GM12878 (cell line): ENCODE measurements at regions of chr10 and their contacts with region 1.

Region 1: DNA sequence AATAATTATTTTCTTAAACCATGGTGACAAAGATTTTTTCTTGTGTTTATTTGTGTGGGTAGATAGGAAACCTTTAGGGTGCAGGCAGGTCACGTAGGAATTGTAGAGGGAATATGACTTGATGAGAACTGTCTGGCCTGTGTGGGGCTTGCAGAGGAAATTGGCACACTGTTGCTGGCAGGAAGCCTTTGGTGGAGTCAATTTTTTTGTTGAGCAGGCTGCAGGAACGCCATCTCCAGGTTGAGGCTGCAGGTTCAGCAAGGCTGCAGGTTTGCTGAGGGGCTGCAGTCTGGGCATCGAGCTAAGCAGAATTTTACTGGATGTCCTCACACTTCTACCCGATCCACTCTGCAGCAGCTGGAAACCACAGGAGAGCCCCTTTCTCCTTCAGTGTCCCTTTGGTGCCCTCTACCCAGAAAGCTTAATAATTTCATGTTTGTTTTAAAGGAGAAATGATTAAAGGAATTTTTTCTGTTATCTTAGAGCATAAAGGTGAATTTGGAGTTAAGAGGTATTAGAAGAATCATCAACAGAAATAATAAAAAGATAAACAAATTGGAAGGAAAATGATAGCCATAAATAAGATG is 37.0 kb downstream of the TBC1D12 start:
- DNase-seq: no peak
- ATAC-seq: no peak
- H3K4me3 ChIP-seq: no peak overlapping the region
- H3K27ac ChIP-seq: no peak overlapping the region
- H3K4me1 ChIP-seq: no peaks in the 10 kb centered on the region
- H3K27me3 ChIP-seq: no peaks in the 10 kb centered on the region
- CTCF ChIP-seq: no peak
- EP300 ChIP-seq: no peak
- POLR2A ChIP-seq: no peak
- RAD21 ChIP-seq: no peak

Region 2: DNA sequence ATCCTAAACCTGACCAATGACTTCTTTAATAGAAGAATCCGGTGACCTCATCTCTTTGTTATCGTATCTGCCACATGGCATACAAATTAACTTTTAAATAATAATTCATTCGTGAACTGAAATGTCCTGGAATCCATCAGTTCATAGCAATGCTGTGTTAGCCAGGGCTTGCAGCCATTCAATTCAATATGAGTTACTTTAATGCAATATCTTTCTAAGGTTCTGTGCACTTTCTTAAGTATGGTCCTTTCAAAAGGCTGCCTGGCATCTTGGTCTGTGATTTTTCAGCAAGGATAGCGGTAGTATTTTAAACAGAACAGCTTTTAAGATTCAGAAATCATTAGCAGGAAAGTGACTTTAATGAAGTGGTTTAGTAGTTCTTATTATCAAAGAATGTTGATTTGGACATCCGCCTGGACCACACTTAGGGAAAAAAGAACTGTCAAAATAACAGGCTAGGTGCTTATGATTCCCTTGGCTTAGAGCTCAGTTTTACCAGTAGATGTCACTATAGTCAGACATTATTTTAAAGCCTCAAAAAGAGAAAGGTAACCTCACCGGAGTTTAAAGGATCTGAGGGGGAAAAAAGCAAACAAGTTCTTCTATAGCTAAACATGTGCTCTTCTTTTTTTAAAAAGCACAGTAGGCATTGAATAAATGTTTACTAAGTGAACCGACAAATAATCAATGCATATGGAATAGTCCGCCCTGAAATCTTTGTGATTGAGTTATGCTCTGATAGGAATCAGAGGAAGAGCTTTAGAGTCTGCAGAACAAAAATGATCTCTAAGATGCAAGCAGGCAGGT is 522.9 kb before region 1 on chr10:
- CTCF ChIA-PET with region 1: interaction called, 14 read pairs
- POLR2A ChIA-PET with region 1: no interaction called
- RAD21 ChIA-PET with region 1: interaction called, 8 read pairs
- SMC1A ChIA-PET with region 1: interaction called, 3 read pairs
- in situ Hi-C with region 1: loop called (anchors 10 kb)
- intact Hi-C with region 1: loop called (anchors 5 kb)
- DNase-seq: no peak
- ATAC-seq: peak; percentile 41; the same call in 2 of the 3 replicates
- H3K4me3 ChIP-seq: no peak overlapping the region
- H3K27ac ChIP-seq: no peak overlapping the region
- H3K4me1 ChIP-seq: no peaks in the 10 kb centered on the region
- H3K27me3 ChIP-seq: no peaks in the 10 kb centered on the region
- CTCF ChIP-seq: peak; percentile 33 to 41 (median 41); a peak in 5 of 6 replicates
- EP300 ChIP-seq: no peak
- POLR2A ChIP-seq: no peak
- RAD21 ChIP-seq: peak; percentile 46

Region 3: DNA sequence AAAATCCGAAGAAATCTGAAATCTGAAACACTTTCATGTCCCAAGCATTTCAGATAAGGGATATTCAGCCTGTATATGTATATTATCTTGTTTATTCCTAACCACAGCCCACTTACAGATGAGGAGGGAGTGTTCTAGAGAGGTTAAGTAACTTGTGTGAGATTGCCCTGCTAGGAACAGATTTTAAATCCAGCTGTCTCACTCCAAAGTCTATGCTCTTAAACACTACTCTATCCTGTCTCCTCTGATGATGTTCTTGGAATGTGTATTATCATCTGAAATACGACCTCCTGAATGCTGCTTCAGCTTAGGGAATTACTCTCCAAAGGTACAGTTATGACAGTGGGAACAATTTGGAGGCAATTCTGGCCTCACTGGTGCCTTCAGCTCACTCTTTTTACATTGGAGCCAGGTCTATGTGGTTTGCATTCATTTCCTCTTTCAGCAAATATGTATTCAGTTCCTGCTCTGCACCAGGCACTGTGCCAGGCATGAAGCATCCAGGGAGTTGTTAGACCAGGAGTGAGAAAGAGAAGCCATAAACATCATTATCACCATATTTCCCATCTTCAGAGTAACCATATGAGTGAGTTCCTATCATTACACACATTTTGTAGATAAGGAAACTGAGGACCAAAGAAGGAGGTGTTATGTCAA is 146.8 kb before region 1 on chr10:
- CTCF ChIA-PET with region 1: interaction called, 11 read pairs
- POLR2A ChIA-PET with region 1: no interaction called
- RAD21 ChIA-PET with region 1: interaction called, 3 read pairs
- SMC1A ChIA-PET with region 1: interaction called, 5 read pairs
- in situ Hi-C with region 1: no loop called
- intact Hi-C with region 1: no loop called
- DNase-seq: no peak
- ATAC-seq: no peak
- H3K4me3 ChIP-seq: no peak overlapping the region
- H3K27ac ChIP-seq: no peak overlapping the region
- H3K4me1 ChIP-seq: no peaks in the 10 kb centered on the region
- H3K27me3 ChIP-seq: no peaks in the 10 kb centered on the region
- CTCF ChIP-seq: no peak
- EP300 ChIP-seq: no peak
- POLR2A ChIP-seq: no peak
- RAD21 ChIP-seq: no peak

Region 4: DNA sequence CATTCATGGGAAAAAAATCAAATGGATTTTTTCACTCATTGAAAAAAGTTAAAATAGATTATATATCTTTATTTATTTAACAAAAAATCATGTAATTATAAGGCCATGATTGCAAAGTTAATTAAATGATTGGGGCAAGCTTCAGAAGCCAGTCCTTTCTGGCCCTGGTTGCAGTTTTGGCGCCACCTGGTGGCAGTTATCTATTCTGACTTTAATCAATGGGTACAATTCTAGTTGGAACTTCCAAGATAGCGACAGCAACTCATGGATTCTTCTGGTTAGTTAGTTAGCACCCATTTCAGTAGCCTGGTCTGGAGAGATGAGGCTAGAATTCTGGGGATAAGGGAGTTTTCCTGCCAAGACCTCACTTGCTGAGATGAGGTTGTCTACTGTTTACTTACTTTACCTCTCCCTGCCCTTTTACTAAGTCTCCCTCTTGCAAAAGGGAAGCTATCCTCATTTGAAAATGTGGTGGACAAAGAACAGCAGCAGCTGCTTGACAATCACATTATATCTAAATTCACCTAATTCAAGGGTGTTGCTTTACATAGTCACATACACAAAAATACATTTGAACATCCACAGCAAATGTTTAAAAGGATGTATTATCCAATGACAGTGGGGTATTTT is 119.0 kb before region 1 on chr10:
- CTCF ChIA-PET with region 1: interaction called, 68 read pairs
- POLR2A ChIA-PET with region 1: interaction called, 3 read pairs
- RAD21 ChIA-PET with region 1: interaction called, 21 read pairs
- SMC1A ChIA-PET with region 1: interaction called, 17 read pairs
- in situ Hi-C with region 1: no loop called
- intact Hi-C with region 1: no loop called
- DNase-seq: no peak
- ATAC-seq: peak; percentile 89
- H3K4me3 ChIP-seq: no peak overlapping the region
- H3K27ac ChIP-seq: no peak overlapping the region
- H3K4me1 ChIP-seq: no peaks in the 10 kb centered on the region
- H3K27me3 ChIP-seq: no peaks in the 10 kb centered on the region
- CTCF ChIP-seq: peak; percentile 69 to 80 (median 69)
- EP300 ChIP-seq: no peak
- POLR2A ChIP-seq: no peak
- RAD21 ChIP-seq: peak; percentile 65

Region 5: GRCh38 chr10:94353336-94353735 is 86.0 kb before region 1 on chr10:
- CTCF ChIA-PET with region 1: interaction called, 10 read pairs
- POLR2A ChIA-PET with region 1: no interaction called
- RAD21 ChIA-PET with region 1: interaction called, 8 read pairs
- SMC1A ChIA-PET with region 1: interaction called, 5 read pairs
- in situ Hi-C with region 1: no loop called
- intact Hi-C with region 1: no loop called
- DNase-seq: no peak
- ATAC-seq: no peak
- H3K4me3 ChIP-seq: no peak overlapping the region
- H3K27ac ChIP-seq: no peak overlapping the region
- H3K4me1 ChIP-seq: no peaks in the 10 kb centered on the region; the same call in 1 of the 2 replicates
- H3K27me3 ChIP-seq: no peaks in the 10 kb centered on the region
- CTCF ChIP-seq: no peak
- EP300 ChIP-seq: no peak
- POLR2A ChIP-seq: no peak
- RAD21 ChIP-seq: no peak

Region 6: GRCh38 chr10:94402015-94402842 is 37.1 kb before region 1 on chr10 and contains the start of gene TBC1D12:
- CTCF ChIA-PET with region 1: interaction called, 15 read pairs
- POLR2A ChIA-PET with region 1: interaction called, 5 read pairs
- RAD21 ChIA-PET with region 1: interaction called, 14 read pairs
- SMC1A ChIA-PET with region 1: interaction called, 17 read pairs
- in situ Hi-C with region 1: no loop called
- intact Hi-C with region 1: no loop called
- DNase-seq: peak; percentile 79
- ATAC-seq: peak; percentile 81
- H3K4me3 ChIP-seq: peak within 1 kb of the TSS; percentile 83
- H3K27ac ChIP-seq: peak within 1 kb of the TSS; percentile 68
- H3K4me1 ChIP-seq: no peaks in the 10 kb centered on the region
- H3K27me3 ChIP-seq: no peaks in the 10 kb centered on the region
- CTCF ChIP-seq: no peak
- EP300 ChIP-seq: 0 out of 4 replicates have a peak, but pooled peaks of 1 of the 2 experiments have one; percentile 7
- POLR2A ChIP-seq: peak; percentile 77
- RAD21 ChIP-seq: no peak
- polyA plus RNA-seq, gene TBC1D12: 3.3 TPM

Region 7: GRCh38 chr10:94456942-94457341 is 17.6 kb after region 1 on chr10:
- CTCF ChIA-PET with region 1: interaction called, 18 read pairs
- POLR2A ChIA-PET with region 1: no interaction called
- RAD21 ChIA-PET with region 1: interaction called, 4 read pairs
- SMC1A ChIA-PET with region 1: interaction called, 5 read pairs
- in situ Hi-C with region 1: no loop called
- intact Hi-C with region 1: no loop called
- DNase-seq: no peak
- ATAC-seq: no peak
- H3K4me3 ChIP-seq: no peak overlapping the region
- H3K27ac ChIP-seq: no peak overlapping the region
- H3K4me1 ChIP-seq: no peaks in the 10 kb centered on the region
- H3K27me3 ChIP-seq: no peaks in the 10 kb centered on the region
- CTCF ChIP-seq: no peak
- EP300 ChIP-seq: no peak
- POLR2A ChIP-seq: no peak
- RAD21 ChIP-seq: no peak

Region 8: DNA sequence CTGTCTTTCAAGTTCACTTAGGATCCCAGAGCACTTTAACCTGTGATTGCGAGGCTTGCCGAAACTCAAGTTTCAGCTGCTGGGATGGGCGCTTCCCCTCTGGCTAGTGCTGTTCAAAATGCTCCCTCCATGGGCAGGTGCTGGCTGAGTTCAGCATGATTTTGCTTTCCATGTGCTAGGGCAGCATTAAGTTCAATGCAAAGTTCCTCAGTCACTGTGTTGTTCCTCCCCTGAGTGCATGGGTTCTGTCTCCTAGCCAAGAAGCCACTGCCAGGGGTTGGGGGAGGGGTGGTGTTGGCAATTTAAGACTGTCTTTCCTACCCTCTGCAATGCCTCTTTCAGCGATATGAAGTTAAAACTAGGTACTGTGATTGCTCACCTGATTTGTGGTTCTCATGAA is 49.7 kb after region 1 on chr10:
- CTCF ChIA-PET with region 1: no interaction called
- POLR2A ChIA-PET with region 1: no interaction called
- RAD21 ChIA-PET with region 1: no interaction called
- SMC1A ChIA-PET with region 1: no interaction called
- in situ Hi-C with region 1: no loop called
- intact Hi-C with region 1: no loop called
- DNase-seq: no peak
- ATAC-seq: no peak
- H3K4me3 ChIP-seq: no peak overlapping the region
- H3K27ac ChIP-seq: no peak overlapping the region
- H3K4me1 ChIP-seq: no peaks in the 10 kb centered on the region
- H3K27me3 ChIP-seq: no peaks in the 10 kb centered on the region
- CTCF ChIP-seq: no peak
- EP300 ChIP-seq: no peak
- POLR2A ChIP-seq: no peak
- RAD21 ChIP-seq: no peak